Common myeloid progenitor, CD34-positive (primary cell): ENCODE measurements at regions of chr2 and their contacts with region 1.

Region 1: DNA sequence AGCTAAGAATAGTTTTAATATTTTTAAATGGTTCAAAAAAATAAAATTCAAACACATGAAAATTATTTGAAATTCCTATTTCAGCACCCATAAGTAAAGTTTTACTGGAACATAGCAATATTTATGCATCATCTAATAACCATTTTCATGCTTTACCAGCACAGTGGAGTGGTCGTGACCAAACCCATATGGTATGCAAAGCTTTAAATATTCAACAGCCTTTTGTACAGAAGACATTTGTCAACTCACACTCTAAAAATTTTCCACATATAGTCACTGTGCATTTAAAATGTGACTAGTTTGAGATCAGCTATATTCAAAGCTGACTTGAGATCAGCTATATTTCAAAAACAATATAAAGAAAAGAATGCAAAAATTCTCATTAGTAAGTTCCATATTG is 46.2 kb downstream of the PUM2 start:
- DNase-seq: no peak
- H3K4me3 ChIP-seq: no peak overlapping the region
- H3K27ac ChIP-seq: no peak overlapping the region
- H3K4me1 ChIP-seq: no peaks in the 10 kb centered on the region
- H3K27me3 ChIP-seq: no peaks in the 10 kb centered on the region

Region 2: GRCh38 chr2:20135631-20136050 is 168.8 kb before region 1 on chr2:
- CTCF ChIA-PET with region 1: no interaction called
- POLR2A ChIA-PET with region 1: no interaction called
- DNase-seq: peak; percentile 51 to 69 (median 69)
- H3K4me3 ChIP-seq: no peak overlapping the region
- H3K27ac ChIP-seq: no peak overlapping the region
- H3K4me1 ChIP-seq: no peaks in the 10 kb centered on the region
- H3K27me3 ChIP-seq: peaks cover 0 to 16% (median 0%) of the 10 kb centered on the region in 5 experiments

Region 3: GRCh38 chr2:20225294-20226151 is 78.9 kb before region 1 on chr2:
- CTCF ChIA-PET with region 1: no interaction called
- POLR2A ChIA-PET with region 1: no interaction called
- DNase-seq: peak; percentile 64 to 78 (median 72)
- H3K4me3 ChIP-seq: peak overlapping the region in 6 of 7 experiments; percentile 25 to 76 (median 54)
- H3K27ac ChIP-seq: no peak overlapping the region
- H3K4me1 ChIP-seq: peaks cover 0 to 28% (median 24%) of the 10 kb centered on the region in 4 experiments
- H3K27me3 ChIP-seq: peaks cover 0 to 49% (median 28%) of the 10 kb centered on the region in 5 experiments

Region 4: DNA sequence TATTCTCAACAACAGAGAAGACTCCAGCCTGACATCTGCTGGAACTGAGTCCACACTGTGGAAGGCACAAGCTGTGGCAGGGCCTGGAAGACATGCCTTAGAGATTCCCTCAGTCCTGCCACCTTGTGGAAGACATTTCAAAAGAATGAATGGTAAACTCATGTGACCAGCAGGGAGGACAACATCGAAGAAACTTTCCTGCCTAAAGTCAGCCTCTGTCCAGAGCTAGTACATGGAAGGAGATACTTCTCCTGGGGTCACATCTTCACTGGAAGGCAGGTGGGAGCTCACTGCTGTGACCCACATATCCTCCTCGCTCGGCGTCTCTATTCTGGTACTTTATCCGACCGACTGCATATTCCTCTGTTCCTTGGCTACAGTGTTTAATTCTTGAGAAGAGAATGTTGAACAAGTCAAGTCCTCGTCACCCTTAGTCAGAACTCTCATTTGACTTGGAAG is 13.3 kb before region 1 on chr2:
- CTCF ChIA-PET with region 1: interaction called, 31 read pairs
- POLR2A ChIA-PET with region 1: no interaction called
- DNase-seq: peak; percentile 77 to 85 (median 84)
- H3K4me3 ChIP-seq: no peak overlapping the region
- H3K27ac ChIP-seq: no peak overlapping the region
- H3K4me1 ChIP-seq: peaks cover 0 to 11% (median 4%) of the 10 kb centered on the region in 4 experiments
- H3K27me3 ChIP-seq: no peaks in the 10 kb centered on the region